Endothelial cell of umbilical vein (primary cell): ENCODE measurements at regions of chr3 and their contacts with region 1.

Region 1: DNA sequence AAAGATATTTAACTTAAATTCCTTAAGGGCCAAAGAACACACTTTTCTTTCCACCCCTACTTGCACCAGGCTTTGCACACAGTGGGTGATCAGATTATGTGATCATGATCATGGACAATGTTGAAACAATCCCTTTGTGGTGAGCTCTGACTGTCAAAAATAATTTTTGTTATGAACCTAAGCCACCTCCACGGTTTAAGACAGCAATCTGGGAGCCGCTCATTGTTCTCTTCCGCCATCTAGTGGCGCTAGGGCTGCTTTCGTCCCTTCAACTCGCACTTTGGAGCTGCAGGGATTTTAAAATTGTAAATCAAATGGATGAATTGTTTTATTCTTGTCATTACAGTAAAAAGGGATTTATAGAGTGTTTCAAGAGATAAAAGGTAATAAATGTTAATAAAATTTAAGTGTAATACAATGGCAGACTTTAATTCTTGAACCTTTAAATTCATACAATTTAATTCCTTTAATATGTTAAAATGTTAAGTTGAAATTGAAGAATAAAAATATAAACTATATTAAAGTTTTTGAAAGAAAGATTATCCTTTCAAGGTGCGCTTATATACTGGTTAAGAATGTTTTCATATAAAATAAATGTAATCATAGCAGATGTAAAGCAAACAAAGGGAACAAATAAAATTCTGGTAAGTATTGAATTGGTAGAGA is 45.3 kb upstream of the ARL6 start:
- DNase-seq: peak; percentile 77
- H3K4me3 ChIP-seq: no peak overlapping the region
- H3K27ac ChIP-seq: no peak overlapping the region
- H3K4me1 ChIP-seq: no peaks in the 10 kb centered on the region
- H3K27me3 ChIP-seq: peaks cover 1 to 6% of the 10 kb centered on the region in 2 experiments
- CTCF ChIP-seq: peak; percentile 82 to 93
- POLR2A ChIP-seq: no peak

Region 2: DNA sequence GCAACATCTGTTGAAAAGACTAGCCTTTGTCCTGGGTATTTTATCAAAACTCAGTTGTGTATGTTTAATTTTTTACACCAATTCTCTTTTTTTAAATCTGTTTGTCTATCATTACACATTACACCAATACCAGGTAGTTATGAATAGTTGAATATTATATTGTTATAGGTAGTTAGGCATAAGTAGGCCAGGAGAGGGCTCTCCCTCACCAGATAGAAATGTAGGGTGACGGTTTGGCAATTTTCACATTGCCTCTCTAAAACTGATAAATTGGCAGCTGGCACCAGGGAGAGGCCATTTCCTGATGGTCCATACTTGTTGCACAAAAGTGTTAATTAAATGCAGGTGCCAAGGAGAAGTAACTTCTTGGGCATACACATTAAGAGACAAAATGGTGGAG is 1387.9 kb before region 1 on chr3:
- CTCF ChIA-PET with region 1: interaction called, 10 read pairs
- POLR2A ChIA-PET with region 1: no interaction called
- dilution Hi-C with region 1: no loop called
- intact Hi-C with region 1: loop called (anchors 5 kb)
- DNase-seq: peak; percentile 43
- H3K4me3 ChIP-seq: no peak overlapping the region
- H3K27ac ChIP-seq: no peak overlapping the region
- H3K4me1 ChIP-seq: no peaks in the 10 kb centered on the region
- H3K27me3 ChIP-seq: no peaks in the 10 kb centered on the region
- CTCF ChIP-seq: peak; percentile 15 to 29
- POLR2A ChIP-seq: no peak

Region 3: DNA sequence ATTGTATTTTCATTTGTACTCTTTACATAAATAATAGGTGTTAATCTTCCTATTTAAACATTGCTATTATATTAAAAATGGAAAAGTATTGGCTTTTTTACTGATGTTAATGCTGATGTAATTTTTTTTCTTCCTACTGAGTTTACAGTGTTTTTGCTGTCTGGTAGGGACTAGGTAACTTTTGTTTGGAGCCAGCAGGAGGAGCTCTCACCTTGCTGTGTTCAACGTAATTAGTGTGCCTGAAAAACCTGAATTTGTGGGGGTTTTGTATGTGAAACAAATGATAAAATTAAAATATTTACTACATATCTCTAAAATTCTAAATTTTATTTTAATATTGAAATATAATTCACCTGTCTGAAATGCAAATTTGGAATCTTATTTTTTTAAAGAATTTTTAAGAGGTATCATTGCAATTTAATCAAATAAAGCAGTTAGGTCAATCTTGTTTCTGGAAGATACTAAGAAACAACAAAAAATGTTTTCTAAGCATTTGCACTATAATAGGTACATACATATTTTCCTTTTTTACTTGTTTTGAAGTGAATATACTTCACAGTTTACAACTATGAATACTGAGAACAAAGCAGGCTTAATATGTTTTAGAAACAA is 856.1 kb before region 1 on chr3:
- CTCF ChIA-PET with region 1: interaction called, 35 read pairs
- POLR2A ChIA-PET with region 1: no interaction called
- dilution Hi-C with region 1: no loop called
- intact Hi-C with region 1: loop called (anchors 2 kb)
- DNase-seq: peak; percentile 28
- H3K4me3 ChIP-seq: no peak overlapping the region
- H3K27ac ChIP-seq: no peak overlapping the region
- H3K4me1 ChIP-seq: no peaks in the 10 kb centered on the region
- H3K27me3 ChIP-seq: no peaks in the 10 kb centered on the region
- CTCF ChIP-seq: peak; percentile 57
- POLR2A ChIP-seq: no peak

Region 4: DNA sequence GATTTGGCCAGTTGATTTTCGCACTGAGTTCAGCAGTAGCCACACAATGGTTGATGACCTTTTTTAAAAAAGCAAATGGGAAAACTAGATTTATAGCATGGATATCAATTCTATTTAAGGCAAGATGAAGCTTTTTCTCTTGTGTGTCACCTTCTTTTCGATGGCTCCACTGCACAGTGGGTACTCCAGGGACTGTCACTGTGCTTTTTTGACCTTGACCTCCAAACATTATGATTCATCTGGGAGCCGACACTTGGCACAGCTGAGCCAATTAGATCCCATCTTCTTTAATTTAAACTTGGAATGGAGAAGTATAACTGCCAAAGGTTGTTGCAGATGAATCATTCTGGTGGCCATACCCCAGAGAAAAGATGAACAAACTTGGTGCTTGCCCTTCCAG is 537.6 kb before region 1 on chr3:
- CTCF ChIA-PET with region 1: no interaction called
- POLR2A ChIA-PET with region 1: no interaction called
- dilution Hi-C with region 1: no loop called
- intact Hi-C with region 1: no loop called
- DNase-seq: no peak
- H3K4me3 ChIP-seq: no peak overlapping the region
- H3K27ac ChIP-seq: no peak overlapping the region
- H3K4me1 ChIP-seq: no peaks in the 10 kb centered on the region
- H3K27me3 ChIP-seq: no peaks in the 10 kb centered on the region
- CTCF ChIP-seq: no peak
- POLR2A ChIP-seq: no peak

Region 5: DNA sequence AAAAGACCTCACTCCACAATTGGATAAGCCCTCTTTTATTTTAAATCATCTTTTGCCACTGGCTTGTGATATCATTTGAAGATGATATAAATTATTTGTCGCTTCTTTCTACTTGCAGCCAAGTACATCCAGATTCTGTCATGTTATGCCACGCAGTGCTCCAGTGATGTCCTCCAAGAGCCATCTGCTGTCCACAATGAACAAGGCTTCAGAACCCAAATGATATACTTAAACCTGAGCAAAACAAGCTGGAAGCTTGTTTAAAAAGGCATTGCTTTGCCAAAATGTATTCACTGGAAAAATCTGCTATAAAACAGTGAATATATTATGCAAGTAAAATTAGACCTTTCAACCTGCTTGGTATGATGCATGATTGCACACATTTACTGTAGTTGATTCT is 13.5 kb before region 1 on chr3:
- CTCF ChIA-PET with region 1: interaction called, 19 read pairs
- POLR2A ChIA-PET with region 1: no interaction called
- dilution Hi-C with region 1: no loop called
- intact Hi-C with region 1: no loop called
- DNase-seq: no peak
- H3K4me3 ChIP-seq: no peak overlapping the region
- H3K27ac ChIP-seq: no peak overlapping the region
- H3K4me1 ChIP-seq: no peaks in the 10 kb centered on the region
- H3K27me3 ChIP-seq: peaks cover 1 to 2% of the 10 kb centered on the region in 2 experiments
- CTCF ChIP-seq: no peak
- POLR2A ChIP-seq: no peak

Region 6: GRCh38 chr3:97736928-97737327 is 17.6 kb after region 1 on chr3:
- CTCF ChIA-PET with region 1: interaction called, 27 read pairs
- POLR2A ChIA-PET with region 1: no interaction called
- dilution Hi-C with region 1: no loop called
- intact Hi-C with region 1: no loop called
- DNase-seq: peak; percentile 16
- H3K4me3 ChIP-seq: no peak overlapping the region
- H3K27ac ChIP-seq: no peak overlapping the region
- H3K4me1 ChIP-seq: peaks cover 2% of the 10 kb centered on the region
- H3K27me3 ChIP-seq: peaks cover 6% of the 10 kb centered on the region in 2 experiments
- CTCF ChIP-seq: no peak
- POLR2A ChIP-seq: no peak

Region 7: DNA sequence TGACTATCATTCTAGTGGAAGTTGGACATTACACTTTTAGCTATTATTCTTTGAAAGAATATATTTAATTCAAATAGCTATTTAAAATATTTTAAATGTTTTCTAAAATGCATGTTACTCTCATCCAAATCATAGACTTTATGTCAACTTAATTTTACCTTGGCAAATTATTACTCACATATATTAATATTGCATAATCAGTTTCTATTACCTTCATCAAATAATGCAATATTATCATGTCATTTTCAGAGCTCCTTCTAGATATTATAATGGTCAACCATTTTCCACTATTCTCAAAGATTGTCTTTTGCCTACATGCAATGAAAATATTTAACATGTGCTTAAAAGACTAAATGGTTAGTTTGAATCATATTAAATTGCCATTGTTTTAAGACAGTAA is 28.4 kb after region 1 on chr3:
- CTCF ChIA-PET with region 1: interaction called, 14 read pairs
- POLR2A ChIA-PET with region 1: no interaction called
- dilution Hi-C with region 1: no loop called
- intact Hi-C with region 1: no loop called
- DNase-seq: no peak
- H3K4me3 ChIP-seq: no peak overlapping the region
- H3K27ac ChIP-seq: no peak overlapping the region
- H3K4me1 ChIP-seq: no peaks in the 10 kb centered on the region
- H3K27me3 ChIP-seq: peaks cover 2% of the 10 kb centered on the region in 2 experiments
- CTCF ChIP-seq: no peak
- POLR2A ChIP-seq: no peak

Region 8: GRCh38 chr3:98855806-98856400 is 1136.6 kb after region 1 on chr3:
- CTCF ChIA-PET with region 1: no interaction called
- POLR2A ChIA-PET with region 1: no interaction called
- dilution Hi-C with region 1: no loop called
- intact Hi-C with region 1: no loop called
- DNase-seq: peak; percentile 84
- H3K4me3 ChIP-seq: no peak overlapping the region
- H3K27ac ChIP-seq: peak overlapping the region; percentile 22
- H3K4me1 ChIP-seq: peaks cover 13% of the 10 kb centered on the region
- H3K27me3 ChIP-seq: no peaks in the 10 kb centered on the region
- CTCF ChIP-seq: no peak
- POLR2A ChIP-seq: no peak